Calu3 (cell line): ENCODE measurements at regions of chr13 and their contacts with region 1.

Region 1: DNA sequence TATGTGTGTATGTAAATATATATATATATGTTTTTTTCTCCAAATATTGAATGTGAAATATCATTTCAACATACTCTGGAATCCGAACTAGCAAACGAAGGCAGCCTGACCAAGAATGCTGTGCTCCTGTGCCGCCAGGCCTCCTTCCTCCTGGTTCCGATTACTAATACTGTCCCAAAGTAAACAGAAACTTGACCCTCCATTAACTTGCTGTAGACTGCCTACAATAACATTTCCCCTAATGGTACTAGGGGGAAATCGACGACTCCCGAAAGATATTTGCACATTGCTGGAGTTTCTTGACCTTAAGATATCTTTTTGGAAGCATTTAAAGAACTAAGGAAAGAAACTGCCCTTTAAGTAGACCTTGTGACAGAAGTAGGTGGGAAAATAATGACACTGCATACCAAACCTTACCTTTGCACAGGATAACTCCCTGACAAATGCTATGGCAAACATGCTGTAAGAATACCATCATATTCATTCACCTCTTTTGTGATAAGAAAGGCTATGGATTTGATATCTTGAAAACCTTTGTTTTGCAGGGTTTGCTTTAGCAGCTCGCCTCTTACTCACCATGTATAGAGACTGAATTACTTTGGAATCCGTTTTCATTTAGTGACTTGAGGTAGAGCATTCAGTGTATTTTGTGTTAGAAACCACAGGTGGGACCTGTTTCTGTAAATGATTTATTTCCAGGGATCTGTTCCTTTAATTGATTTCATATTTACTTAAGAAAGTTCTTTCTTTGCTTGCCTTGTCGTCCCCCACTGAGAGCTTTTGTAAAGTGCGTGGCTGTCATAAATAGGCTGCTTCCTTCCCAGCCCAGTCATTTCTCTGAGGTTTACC is 80.1 kb downstream of the KLF5 start:
- DNase-seq: peak; percentile 20
- H3K4me3 Mint-ChIP-seq: peak overlapping the region; percentile 34
- H3K27ac Mint-ChIP-seq: peak overlapping the region; percentile 98
- H3K4me1 Mint-ChIP-seq: peaks cover 8% of the 10 kb centered on the region
- H3K27me3 Mint-ChIP-seq: no peaks in the 10 kb centered on the region
- CTCF ChIP-seq: no peak

Region 2: DNA sequence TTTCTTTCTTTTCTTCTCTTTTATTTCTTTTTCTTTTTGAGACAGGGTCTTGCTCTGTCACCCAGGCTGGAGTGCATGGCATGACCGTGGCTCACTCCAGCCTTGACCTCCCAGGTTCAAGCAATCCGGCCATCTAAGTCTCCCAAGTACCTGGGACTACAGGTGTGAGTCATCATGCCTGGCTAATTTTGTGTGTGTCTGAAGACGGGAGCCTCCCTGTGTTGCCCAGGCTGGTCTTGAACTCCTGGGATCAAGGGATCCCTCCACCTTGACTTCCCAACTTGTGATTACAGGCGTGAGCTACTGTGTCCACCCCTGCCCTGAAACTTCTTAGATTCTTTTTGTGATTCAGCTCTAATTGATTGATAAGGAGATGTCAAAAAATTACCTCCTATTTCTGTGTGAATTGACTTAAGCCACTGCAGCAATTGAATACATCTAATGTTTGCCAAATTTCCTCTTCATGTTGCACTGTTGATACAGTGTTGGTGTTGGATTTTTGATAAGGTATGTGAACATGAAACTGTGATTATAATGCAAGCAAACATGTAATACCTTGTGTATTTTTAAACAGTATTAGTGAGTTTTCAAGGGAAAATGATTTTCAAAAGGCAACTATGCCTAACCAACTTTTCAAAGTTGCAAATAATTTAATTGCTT is 57.5 kb before region 1 on chr13:
- CTCF ChIA-PET with region 1: no interaction called
- intact Hi-C with region 1: loop called (anchors 10 kb)
- DNase-seq: no peak
- H3K4me3 Mint-ChIP-seq: no peak overlapping the region
- H3K27ac Mint-ChIP-seq: peak overlapping the region; percentile 80
- H3K4me1 Mint-ChIP-seq: peaks cover 8% of the 10 kb centered on the region
- H3K27me3 Mint-ChIP-seq: no peaks in the 10 kb centered on the region
- CTCF ChIP-seq: no peak

Region 3: GRCh38 chr13:73107481-73107880 is 31.4 kb before region 1 on chr13:
- CTCF ChIA-PET with region 1: no interaction called
- intact Hi-C with region 1: loop called (anchors 2 kb)
- DNase-seq: no peak
- H3K4me3 Mint-ChIP-seq: peak overlapping the region; percentile 30
- H3K27ac Mint-ChIP-seq: peak overlapping the region; percentile 90
- H3K4me1 Mint-ChIP-seq: peaks cover 21% of the 10 kb centered on the region
- H3K27me3 Mint-ChIP-seq: no peaks in the 10 kb centered on the region
- CTCF ChIP-seq: no peak

Region 4: GRCh38 chr13:73171926-73172325 is 33.1 kb after region 1 on chr13:
- CTCF ChIA-PET with region 1: no interaction called
- intact Hi-C with region 1: loop called (anchors 2 kb)
- DNase-seq: no peak
- H3K4me3 Mint-ChIP-seq: no peak overlapping the region
- H3K27ac Mint-ChIP-seq: peak overlapping the region; percentile 68
- H3K4me1 Mint-ChIP-seq: peaks cover 20% of the 10 kb centered on the region
- H3K27me3 Mint-ChIP-seq: no peaks in the 10 kb centered on the region
- CTCF ChIP-seq: no peak

Region 5: DNA sequence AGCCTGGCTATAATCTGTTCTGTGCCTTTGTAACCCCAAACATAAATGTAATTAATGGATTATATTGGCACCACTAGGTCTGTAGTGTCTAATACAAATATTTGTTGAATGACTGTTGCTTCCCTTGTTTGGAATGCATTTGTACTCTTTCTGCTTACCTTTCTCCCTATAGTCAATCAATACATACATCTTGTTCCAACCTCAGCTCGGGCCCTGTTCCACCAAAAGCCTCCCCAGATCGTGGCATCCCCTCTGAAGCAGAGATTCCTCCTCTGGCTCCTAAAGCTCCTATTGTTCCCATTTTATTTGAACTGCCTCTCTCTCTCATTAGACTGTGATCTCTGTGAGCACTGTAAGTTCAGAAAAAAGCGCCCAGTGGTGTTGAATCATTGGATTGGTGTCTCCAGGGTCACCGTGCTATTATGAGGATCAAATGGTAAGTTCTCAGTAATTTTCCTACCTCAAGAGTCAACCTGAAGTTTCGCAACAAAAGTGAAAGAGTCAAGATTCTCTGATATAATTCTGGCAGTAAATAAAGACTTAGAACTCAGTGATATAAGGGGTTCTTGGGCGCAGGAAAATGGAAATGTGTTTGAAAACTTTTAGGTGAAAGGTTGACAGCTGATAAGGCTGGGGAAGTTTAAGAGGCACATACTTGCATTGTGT is 71.5 kb after region 1 on chr13:
- CTCF ChIA-PET with region 1: no interaction called
- intact Hi-C with region 1: loop called (anchors 2 kb)
- DNase-seq: peak; percentile 18
- H3K4me3 Mint-ChIP-seq: peak overlapping the region; percentile 49
- H3K27ac Mint-ChIP-seq: peak overlapping the region; percentile 96
- H3K4me1 Mint-ChIP-seq: peaks cover 31% of the 10 kb centered on the region
- H3K27me3 Mint-ChIP-seq: no peaks in the 10 kb centered on the region
- CTCF ChIP-seq: no peak